ENCODE measurements at regions of chr7 and their contacts with region 1.

Region 1: DNA sequence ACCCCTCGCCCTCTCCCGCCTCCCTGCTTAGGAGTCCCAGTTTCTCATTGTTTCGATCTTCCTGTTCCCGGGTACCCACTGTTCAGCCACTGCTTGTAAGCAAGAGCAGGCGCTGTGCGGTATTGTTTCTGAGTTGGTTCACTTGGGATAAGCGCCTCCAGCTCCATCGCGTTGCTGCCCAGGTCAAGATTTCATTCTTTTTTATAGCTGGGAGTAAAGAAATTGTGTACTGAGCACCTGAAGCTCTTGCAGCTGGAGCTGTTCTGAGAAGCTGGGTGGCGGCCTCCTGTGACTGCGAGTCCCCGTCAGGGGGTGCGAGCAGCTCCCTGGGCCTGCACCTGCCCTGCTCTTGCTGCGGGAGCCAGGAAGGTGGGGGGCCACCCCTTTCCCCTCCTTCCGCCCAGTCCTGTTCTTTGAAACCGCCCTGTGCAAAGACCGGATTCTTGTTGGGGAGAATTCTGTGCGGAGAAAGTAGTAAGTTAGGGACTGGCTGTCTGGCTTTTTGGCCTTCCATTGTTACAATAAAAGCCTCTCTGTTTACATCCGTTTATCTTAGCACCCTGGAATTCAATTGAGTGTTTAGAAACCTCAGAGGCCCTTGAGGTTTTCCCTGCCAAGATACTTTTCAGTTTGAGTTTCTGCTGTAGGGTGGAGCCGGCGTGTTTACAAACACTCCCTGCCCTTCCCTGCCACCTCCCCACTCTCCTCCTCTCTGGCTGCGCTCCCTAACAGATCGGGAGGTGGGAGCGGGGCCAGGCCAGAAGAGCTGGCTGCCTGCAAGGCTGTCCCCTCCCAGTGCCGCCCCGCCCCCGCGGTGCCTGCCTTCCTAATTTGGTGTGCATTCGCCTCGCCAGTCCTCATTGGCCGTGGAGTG is 30.8 kb upstream of the AP5Z1 start:
- DNase-seq: peak; percentile 87
- ATAC-seq: peak; percentile 79
- H3K4me3 Mint-ChIP-seq: peak overlapping the region; percentile 68
- H3K27ac Mint-ChIP-seq: peak overlapping the region; percentile 91
- H3K4me1 Mint-ChIP-seq: peaks cover 77% of the 10 kb centered on the region
- H3K27me3 Mint-ChIP-seq: no peaks in the 10 kb centered on the region

Region 2: GRCh38 chr7:4681886-4682620 is 62.6 kb before region 1 on chr7 and contains the start of gene FOXK1:
- CTCF ChIA-PET with region 1: no interaction called
- POLR2A ChIA-PET with region 1: interaction called, 4 read pairs
- intact Hi-C with region 1: loop called (anchors 1 to 2 kb)
- DNase-seq: peak; percentile 90
- ATAC-seq: peak; percentile 78
- H3K4me3 Mint-ChIP-seq: peak within 1 kb of the TSS; percentile 91
- H3K27ac Mint-ChIP-seq: peak within 1 kb of the TSS; percentile 98
- H3K4me1 Mint-ChIP-seq: peaks cover 30% of the 10 kb centered on the region
- H3K27me3 Mint-ChIP-seq: no peaks in the 10 kb centered on the region
- total RNA-seq, gene FOXK1: 30.0 to 33.9 TPM